Common myeloid progenitor, CD34-positive (primary cell): ENCODE measurements at regions of chr1 and their contacts with region 1.

Region 1: GRCh38 chr1:92291372-92291999 is 7.3 kb downstream of the GLMN start:
- DNase-seq: peak; percentile 50 to 71 (median 66)
- H3K4me3 ChIP-seq: no peak overlapping the region
- H3K27ac ChIP-seq: no peak overlapping the region
- H3K4me1 ChIP-seq: peaks cover 0 to 5% (median 2%) of the 10 kb centered on the region in 4 experiments
- H3K27me3 ChIP-seq: no peaks in the 10 kb centered on the region

Region 2: DNA sequence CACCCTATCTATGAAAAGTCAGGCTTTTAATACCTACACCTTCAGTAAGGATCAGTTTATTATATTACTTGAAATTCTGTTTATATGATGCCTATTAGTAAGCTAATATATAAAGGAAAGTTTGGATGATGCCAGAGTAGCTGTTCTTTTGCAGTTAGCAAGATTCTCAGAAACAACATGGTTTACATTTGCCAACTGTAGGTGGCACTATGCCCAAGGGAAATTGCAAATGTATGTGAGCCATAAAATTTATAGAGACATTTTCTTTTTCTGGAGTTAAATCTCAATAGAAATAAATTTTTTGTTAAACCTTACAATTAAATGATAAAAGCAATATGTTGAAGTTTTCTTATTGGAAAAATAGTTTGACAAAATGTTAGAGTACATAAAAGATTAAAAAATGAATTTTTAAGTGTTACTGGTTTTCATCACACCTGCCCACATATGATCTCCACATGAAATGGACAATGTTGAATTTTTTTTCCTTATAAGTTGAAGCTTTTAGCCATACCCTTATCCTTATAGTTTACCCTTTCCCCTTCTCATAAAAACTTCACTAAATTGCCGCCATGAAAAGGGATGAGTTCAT is 293.8 kb before region 1 on chr1:
- CTCF ChIA-PET with region 1: interaction called, 27 read pairs
- POLR2A ChIA-PET with region 1: no interaction called
- DNase-seq: peak; percentile 54 to 84 (median 75)
- H3K4me3 ChIP-seq: no peak overlapping the region
- H3K27ac ChIP-seq: no peak overlapping the region
- H3K4me1 ChIP-seq: no peaks in the 10 kb centered on the region
- H3K27me3 ChIP-seq: no peaks in the 10 kb centered on the region

Region 3: GRCh38 chr1:92277105-92277723 is 14.3 kb before region 1 on chr1:
- CTCF ChIA-PET with region 1: interaction called, 11 read pairs
- POLR2A ChIA-PET with region 1: no interaction called
- DNase-seq: no peak
- H3K4me3 ChIP-seq: no peak overlapping the region
- H3K27ac ChIP-seq: no peak overlapping the region
- H3K4me1 ChIP-seq: no peaks in the 10 kb centered on the region
- H3K27me3 ChIP-seq: no peaks in the 10 kb centered on the region